GM10248 (cell line): ENCODE measurements at regions of chr12 and their contacts with region 1.

Region 1: GRCh38 chr12:95582230-95583058 is 31.2 kb upstream of the USP44 start:
- DNase-seq: no peak
- CTCF ChIP-seq: no peak

Region 2: DNA sequence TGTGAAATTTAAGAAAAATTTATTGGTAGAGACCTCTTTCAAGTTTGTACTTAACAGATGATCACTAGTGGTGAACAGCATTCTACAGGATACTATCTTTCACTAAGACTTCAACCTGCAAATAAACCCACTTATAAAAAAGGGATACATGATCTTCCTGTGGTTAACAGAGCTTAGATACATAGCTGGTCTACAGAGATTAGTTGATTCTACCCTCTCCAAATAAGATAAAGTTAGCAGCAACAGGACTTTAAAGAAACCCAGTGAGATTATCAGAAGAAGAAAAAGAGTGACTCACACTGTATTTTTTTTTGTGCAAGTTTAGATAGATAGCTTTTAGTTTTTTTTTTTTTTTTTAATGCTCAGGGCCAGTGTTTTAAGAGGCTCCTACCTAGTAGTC is 65.7 kb before region 1 on chr12:
- CTCF ChIA-PET with region 1: no interaction called
- POLR2A ChIA-PET with region 1: interaction called, 10 read pairs
- DNase-seq: no peak
- CTCF ChIP-seq: no peak

Region 3: GRCh38 chr12:95802482-95803264 is 220.2 kb after region 1 on chr12:
- CTCF ChIA-PET with region 1: no interaction called
- POLR2A ChIA-PET with region 1: no interaction called
- DNase-seq: no peak
- CTCF ChIP-seq: no peak